ENCODE measurements at regions of chr1 and their contacts with region 1.

Region 1: GRCh38 chr1:185566995-185567394 is 167.2 kb upstream of the HMCN1 start:
- DNase-seq: peak in 7 of 9 donors; percentile 85 to 94 (median 91)
- ATAC-seq: peak; percentile 92
- H3K4me3 ChIP-seq: no peak overlapping the region
- H3K4me3 Mint-ChIP-seq: peak overlapping the region; percentile 46 to 87 (median 78)
- H3K27ac ChIP-seq: peak overlapping the region; percentile 89
- H3K27ac Mint-ChIP-seq: peak overlapping the region; percentile 96 to 100 (median 98)
- H3K4me1 ChIP-seq: peaks cover 37 to 56% of the 10 kb centered on the region in 2 donors
- H3K4me1 Mint-ChIP-seq: peaks cover 47 to 91% (median 86%) of the 10 kb centered on the region in 7 donors
- H3K27me3 ChIP-seq: no peaks in the 10 kb centered on the region
- H3K27me3 Mint-ChIP-seq: no peaks in the 10 kb centered on the region

Region 2: GRCh38 chr1:185281245-185281644 is 285.8 kb before region 1 on chr1:
- CTCF ChIA-PET with region 1: no interaction called
- POLR2A ChIA-PET with region 1: interaction called, 4 read pairs
- intact Hi-C with region 1: loop called in 1 of 2 experiments (anchors 1 kb)
- DNase-seq: peak in 7 of 9 donors; percentile 56 to 81 (median 72)
- ATAC-seq: peak; percentile 92
- H3K4me3 ChIP-seq: peak overlapping the region; percentile 11
- H3K4me3 Mint-ChIP-seq: peak overlapping the region; percentile 62 to 88 (median 75)
- H3K27ac ChIP-seq: peak overlapping the region; percentile 59
- H3K27ac Mint-ChIP-seq: peak overlapping the region; percentile 86 to 100 (median 96)
- H3K4me1 ChIP-seq: peaks cover 23 to 55% of the 10 kb centered on the region in 2 donors
- H3K4me1 Mint-ChIP-seq: peaks cover 40 to 75% (median 71%) of the 10 kb centered on the region in 7 donors
- H3K27me3 ChIP-seq: no peaks in the 10 kb centered on the region
- H3K27me3 Mint-ChIP-seq: no peaks in the 10 kb centered on the region

Region 3: GRCh38 chr1:185439727-185440415 is 127.1 kb before region 1 on chr1:
- CTCF ChIA-PET with region 1: no interaction called
- POLR2A ChIA-PET with region 1: no interaction called
- intact Hi-C with region 1: loop called in 1 of 2 experiments (anchors 1 kb)
- DNase-seq: peak in 1 of 9 donors; percentile 34
- ATAC-seq: peak; percentile 80
- H3K4me3 ChIP-seq: no peak overlapping the region
- H3K4me3 Mint-ChIP-seq: no peak overlapping the region
- H3K27ac ChIP-seq: no peak overlapping the region
- H3K27ac Mint-ChIP-seq: no peak overlapping the region
- H3K4me1 ChIP-seq: peaks cover 0 to 20% of the 10 kb centered on the region in 2 donors
- H3K4me1 Mint-ChIP-seq: peaks cover 0 to 36% (median 3%) of the 10 kb centered on the region in 7 donors
- H3K27me3 ChIP-seq: no peaks in the 10 kb centered on the region
- H3K27me3 Mint-ChIP-seq: no peaks in the 10 kb centered on the region

Region 4: GRCh38 chr1:185533596-185533995 is 33.4 kb before region 1 on chr1:
- CTCF ChIA-PET with region 1: no interaction called
- POLR2A ChIA-PET with region 1: no interaction called
- intact Hi-C with region 1: loop called in 1 of 2 experiments (anchors 2 kb)
- DNase-seq: no peak
- ATAC-seq: no peak
- H3K4me3 ChIP-seq: no peak overlapping the region
- H3K4me3 Mint-ChIP-seq: no peak overlapping the region
- H3K27ac ChIP-seq: no peak overlapping the region
- H3K27ac Mint-ChIP-seq: no peak overlapping the region
- H3K4me1 ChIP-seq: no peaks in the 10 kb centered on the region
- H3K4me1 Mint-ChIP-seq: peaks cover 0 to 4% (median 0%) of the 10 kb centered on the region in 7 donors
- H3K27me3 ChIP-seq: no peaks in the 10 kb centered on the region
- H3K27me3 Mint-ChIP-seq: peaks cover 0 to 8% (median 0%) of the 10 kb centered on the region in 5 donors

Region 5: DNA sequence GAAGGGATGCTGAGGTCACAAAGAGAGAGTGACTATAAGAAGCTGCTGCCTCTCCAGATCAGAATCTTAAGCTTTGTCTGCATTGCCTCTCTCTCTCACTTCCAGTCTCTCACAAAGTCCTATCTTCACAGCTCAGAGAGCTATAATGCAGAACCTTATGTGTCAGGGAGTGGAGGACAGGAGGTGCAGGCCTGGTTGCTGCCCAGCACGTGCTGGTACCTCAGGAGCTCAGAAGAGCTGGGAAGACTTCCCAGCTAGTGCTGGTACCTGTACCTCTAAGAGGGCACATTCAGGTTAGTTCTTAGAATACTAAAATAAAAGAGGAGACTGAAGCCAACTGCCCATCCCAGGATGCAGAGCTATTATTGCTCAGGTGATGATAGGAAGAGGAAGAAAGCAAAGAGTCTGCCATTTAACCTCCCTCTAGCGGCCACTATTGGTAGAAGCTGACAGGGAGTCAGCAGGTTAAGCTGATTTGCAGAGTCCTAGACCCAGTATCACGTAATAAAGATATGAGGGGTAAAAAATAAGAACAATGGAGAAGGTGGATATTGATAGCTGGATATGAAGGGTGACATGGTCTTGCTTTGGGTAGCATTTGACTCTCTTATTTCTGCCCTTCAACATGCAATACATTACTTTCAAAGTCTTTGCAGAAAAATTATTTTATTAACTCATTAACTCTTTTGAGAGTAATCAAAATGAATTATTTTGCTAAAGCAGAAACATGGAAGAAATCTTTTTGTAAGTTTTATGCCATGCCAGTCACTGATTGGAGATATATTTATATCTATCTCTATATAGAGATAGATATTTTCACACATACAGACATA is 29.1 kb after region 1 on chr1:
- CTCF ChIA-PET with region 1: interaction called, 22 read pairs
- POLR2A ChIA-PET with region 1: interaction called, 8 read pairs
- intact Hi-C with region 1: loop called (anchors 1 to 2 kb)
- DNase-seq: peak; percentile 16 to 61 (median 45)
- ATAC-seq: peak; percentile 80
- H3K4me3 ChIP-seq: no peak overlapping the region
- H3K4me3 Mint-ChIP-seq: no peak overlapping the region
- H3K27ac ChIP-seq: no peak overlapping the region
- H3K27ac Mint-ChIP-seq: peak overlapping the region in 5 of 9 donors; percentile 17 to 72 (median 51)
- H3K4me1 ChIP-seq: peaks cover 0 to 5% of the 10 kb centered on the region in 2 donors
- H3K4me1 Mint-ChIP-seq: peaks cover 13 to 36% (median 32%) of the 10 kb centered on the region in 7 donors
- H3K27me3 ChIP-seq: no peaks in the 10 kb centered on the region
- H3K27me3 Mint-ChIP-seq: no peaks in the 10 kb centered on the region

Region 6: DNA sequence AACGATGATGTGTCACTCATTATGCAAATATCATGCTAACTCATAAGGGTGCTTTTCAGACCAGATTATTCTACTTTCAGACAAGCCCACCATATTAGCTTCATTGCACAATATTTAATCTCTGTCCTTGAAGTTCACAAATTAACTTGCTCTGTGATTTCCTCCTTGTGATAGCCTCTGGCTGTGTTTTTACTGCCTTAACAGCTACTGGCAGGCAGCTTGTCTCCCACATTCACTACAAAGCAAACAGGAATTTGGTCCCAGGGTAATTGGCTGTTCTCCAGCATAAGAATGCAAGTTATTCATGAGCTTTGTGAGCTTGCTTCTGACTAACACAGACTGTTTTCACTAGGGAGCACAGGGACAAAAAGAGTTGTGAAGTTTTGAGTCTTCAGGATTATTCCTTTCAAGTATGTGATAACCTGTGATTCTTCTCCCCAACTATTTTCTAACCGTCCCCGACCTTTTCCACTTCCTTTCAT is 79.2 kb after region 1 on chr1:
- CTCF ChIA-PET with region 1: no interaction called
- POLR2A ChIA-PET with region 1: no interaction called
- intact Hi-C with region 1: loop called in 1 of 2 experiments (anchors 2 kb)
- DNase-seq: no peak
- ATAC-seq: no peak
- H3K4me3 ChIP-seq: no peak overlapping the region
- H3K4me3 Mint-ChIP-seq: peak overlapping the region in 8 of 10 donors; percentile 11 to 62 (median 46)
- H3K27ac ChIP-seq: no peak overlapping the region
- H3K27ac Mint-ChIP-seq: peak overlapping the region in 7 of 9 donors; percentile 48 to 97 (median 85)
- H3K4me1 ChIP-seq: peaks cover 3 to 19% of the 10 kb centered on the region in 2 donors
- H3K4me1 Mint-ChIP-seq: peaks cover 17 to 53% (median 41%) of the 10 kb centered on the region in 7 donors
- H3K27me3 ChIP-seq: no peaks in the 10 kb centered on the region
- H3K27me3 Mint-ChIP-seq: no peaks in the 10 kb centered on the region

Region 7: DNA sequence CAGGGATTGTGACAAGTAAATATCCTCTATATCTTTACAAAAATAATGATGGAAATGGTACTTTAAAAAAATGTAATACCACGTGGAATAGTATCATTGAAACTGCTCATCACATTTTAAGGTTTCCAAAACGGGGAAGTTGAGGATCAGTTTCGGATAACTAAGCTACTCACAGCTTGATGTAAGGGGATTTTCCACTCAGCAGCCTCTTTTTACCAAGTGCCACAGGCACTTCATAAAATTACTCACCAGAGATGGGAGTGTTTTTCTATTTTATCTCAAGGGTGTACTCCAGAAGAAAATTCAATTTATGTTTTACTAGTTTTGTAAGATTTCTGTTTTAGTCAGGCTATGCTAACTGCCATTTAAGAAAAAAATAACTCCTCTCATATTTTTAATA is 716.4 kb after region 1 on chr1:
- CTCF ChIA-PET with region 1: no interaction called
- POLR2A ChIA-PET with region 1: no interaction called
- intact Hi-C with region 1: loop called in 1 of 2 experiments (anchors 5 kb)
- DNase-seq: no peak
- ATAC-seq: no peak
- H3K4me3 ChIP-seq: no peak overlapping the region
- H3K4me3 Mint-ChIP-seq: peak overlapping the region in 3 of 10 donors; percentile 29 to 57 (median 35)
- H3K27ac ChIP-seq: no peak overlapping the region
- H3K27ac Mint-ChIP-seq: peak overlapping the region in 4 of 9 donors; percentile 8 to 89 (median 87)
- H3K4me1 ChIP-seq: peaks cover 0 to 12% of the 10 kb centered on the region in 2 donors
- H3K4me1 Mint-ChIP-seq: peaks cover 19 to 48% (median 39%) of the 10 kb centered on the region in 7 donors
- H3K27me3 ChIP-seq: no peaks in the 10 kb centered on the region
- H3K27me3 Mint-ChIP-seq: peaks cover 0 to 3% (median 0%) of the 10 kb centered on the region in 5 donors

Measured in naive thymus-derived CD4-positive, alpha-beta T cell (primary cell).